Left colon (tissue), 2 donors: ENCODE measurements at regions of chr14 and their contacts with region 1.

Region 1: GRCh38 chr14:101774006-101774795 is 12.7 kb downstream of the PPP2R5C start:
- DNase-seq: no peak
- ATAC-seq: no peak

Region 2: GRCh38 chr14:101839236-101839635 is 65.0 kb after region 1 on chr14:
- intact Hi-C with region 1: loop called in 1 of 2 experiments (anchors 10 kb)
- DNase-seq: no peak
- ATAC-seq: no peak

Region 3: GRCh38 chr14:101912841-101913240 is 138.6 kb after region 1 on chr14:
- intact Hi-C with region 1: no loop called
- DNase-seq: no peak
- ATAC-seq: no peak

Region 4: DNA sequence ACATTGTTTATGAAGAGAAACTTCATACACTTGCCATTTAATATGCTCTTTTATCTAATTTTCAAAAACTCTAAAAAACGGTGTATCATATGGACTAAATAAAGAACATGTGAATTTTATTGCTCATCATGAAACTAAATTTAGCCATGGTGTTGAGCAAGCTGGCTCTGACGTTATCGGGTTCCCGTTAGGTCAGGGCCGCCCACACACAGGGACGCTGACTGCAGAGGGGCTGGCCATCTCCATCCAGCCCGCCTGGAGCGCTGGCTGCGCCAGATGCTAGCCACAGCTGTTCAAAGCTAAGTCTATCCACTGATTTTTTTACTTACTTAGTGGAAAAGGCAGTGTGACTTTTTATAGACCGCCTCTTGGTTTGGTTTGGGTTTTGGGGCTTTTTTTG is 153.7 kb after region 1 on chr14:
- intact Hi-C with region 1: loop called in 1 of 2 experiments (anchors 10 kb)
- DNase-seq: peak; percentile 67 to 76
- ATAC-seq: peak; percentile 50

Region 5: DNA sequence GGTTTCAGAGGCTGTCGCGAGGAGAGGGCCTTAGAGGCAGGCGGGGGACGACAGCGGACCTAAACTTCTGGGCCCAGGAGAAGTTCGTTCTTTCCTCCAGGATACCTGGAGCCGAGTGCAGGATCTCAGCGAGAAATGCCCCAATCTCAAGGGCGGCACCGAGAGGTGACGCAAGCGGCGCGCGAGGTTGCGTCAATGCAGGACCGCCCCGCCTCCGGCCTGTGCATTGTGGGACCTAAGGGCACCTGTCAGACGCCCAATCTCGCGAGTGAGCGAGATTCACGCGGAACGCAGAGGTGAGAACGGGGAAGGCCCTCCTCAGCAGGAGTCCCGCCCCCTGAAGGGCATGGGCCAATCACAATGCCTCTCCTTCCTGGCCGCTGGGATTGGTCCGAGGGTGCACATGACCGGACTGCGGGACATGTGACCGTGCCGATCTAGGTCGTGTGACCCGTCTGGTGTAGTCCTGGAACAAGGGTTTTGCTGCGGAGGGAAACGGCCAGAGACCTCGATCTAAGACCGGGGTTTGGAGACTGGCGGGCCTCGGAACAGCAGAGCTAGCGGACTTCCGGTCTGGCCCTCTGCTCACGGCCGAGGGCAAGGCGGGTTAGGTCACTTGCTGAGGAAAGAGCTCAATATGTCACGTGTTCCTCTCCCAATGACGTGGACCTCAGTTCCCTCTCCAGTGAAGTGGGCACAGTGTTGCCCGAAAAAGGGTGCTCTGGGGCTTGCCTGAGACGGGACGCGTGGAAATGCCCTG is 173.9 kb after region 1 on chr14:
- intact Hi-C with region 1: loop called in 1 of 2 experiments (anchors 5 kb)
- DNase-seq: peak; percentile 100
- ATAC-seq: peak; percentile 94

Region 6: GRCh38 chr14:102591889-102592763 is 817.9 kb after region 1 on chr14 and contains the start of gene RCOR1:
- intact Hi-C with region 1: no loop called
- DNase-seq: peak; percentile 97 to 99
- ATAC-seq: peak; percentile 87
- total RNA-seq, gene RCOR1: 35.7 to 36.2 TPM